CD8-positive, alpha-beta memory T cell (primary cell): ENCODE measurements at regions of chr2 and their contacts with region 1.

Region 1: DNA sequence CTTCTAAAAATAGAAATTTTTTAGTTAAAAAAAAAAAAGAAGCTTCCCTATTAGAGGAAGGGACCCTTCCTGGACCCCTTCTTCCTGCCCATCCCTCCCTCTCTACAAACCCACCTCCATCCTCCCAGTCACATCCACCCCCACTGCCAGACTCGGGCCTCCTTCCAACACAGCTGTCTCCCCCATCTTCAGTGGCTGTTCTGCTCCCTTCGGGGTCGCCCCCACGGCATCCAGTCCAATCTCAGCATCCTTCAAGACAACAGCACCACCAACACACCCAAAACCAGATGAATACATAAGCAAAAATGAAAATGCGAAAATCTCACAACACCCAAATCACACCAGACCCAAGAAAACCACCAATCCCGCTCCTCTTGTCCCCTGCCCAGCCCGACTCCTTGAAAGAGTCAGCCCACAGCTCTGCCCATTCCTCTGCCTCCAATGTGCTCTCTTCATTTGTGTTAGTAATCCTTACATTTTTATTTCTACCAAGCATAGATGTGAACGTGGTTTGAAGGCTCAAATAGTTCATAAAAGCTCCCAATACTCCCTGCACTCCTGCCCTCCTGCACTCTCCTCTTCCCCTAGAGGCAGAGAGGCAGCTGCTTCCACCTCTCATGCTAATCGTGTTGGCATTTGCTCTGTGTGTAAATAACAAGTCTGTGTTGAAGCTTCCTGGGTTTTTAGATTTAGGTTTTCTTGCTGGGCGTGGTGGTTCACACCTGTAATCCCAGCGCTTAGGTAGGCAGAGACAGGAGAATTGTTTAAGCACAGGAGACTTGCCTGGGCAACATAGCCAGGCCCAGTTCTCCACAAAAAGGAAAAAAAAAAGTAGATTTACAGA is 37.0 kb downstream of the MAL start:
- DNase-seq: no peak
- H3K4me3 ChIP-seq: no peak overlapping the region
- H3K4me3 Mint-ChIP-seq: peak overlapping the region in 2 of 7 donors; percentile 24 to 34
- H3K27ac ChIP-seq: no peak overlapping the region
- H3K27ac Mint-ChIP-seq: peak overlapping the region in 5 of 8 donors; percentile 53 to 76 (median 65)
- H3K4me1 ChIP-seq: peaks cover 25% of the 10 kb centered on the region
- H3K4me1 Mint-ChIP-seq: peaks cover 10 to 28% (median 19%) of the 10 kb centered on the region in 3 donors
- H3K27me3 ChIP-seq: no peaks in the 10 kb centered on the region
- H3K27me3 Mint-ChIP-seq: peaks cover 4 to 10% of the 10 kb centered on the region in 2 donors

Region 2: DNA sequence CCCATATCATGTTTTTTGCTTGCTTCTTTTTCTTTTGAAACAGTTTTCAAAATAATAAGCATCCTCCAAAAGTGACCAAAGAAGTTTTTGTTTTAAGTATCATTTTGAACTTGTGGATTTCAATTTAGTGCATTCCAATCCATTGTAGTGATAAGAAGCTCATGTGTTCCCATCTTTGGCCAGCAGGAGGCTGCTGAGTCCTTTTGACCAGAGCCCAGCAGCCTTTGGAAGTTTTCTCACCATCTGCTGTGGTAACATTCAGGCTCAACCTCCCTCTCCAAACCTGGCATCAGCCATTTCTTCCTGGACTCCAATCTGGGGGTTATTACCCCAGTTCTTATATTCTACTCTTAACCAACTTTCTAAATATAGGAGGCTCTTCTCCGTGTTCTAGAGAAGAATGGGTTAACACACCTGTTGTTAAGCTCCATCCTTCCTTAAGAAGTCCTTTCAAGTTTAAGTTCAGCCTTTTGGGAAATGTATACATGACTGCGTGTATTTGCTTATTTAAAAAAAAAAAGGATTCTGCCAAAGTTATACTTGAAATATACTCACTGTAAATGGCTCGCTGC is 76.0 kb before region 1 on chr2:
- CTCF ChIA-PET with region 1: no interaction called
- POLR2A ChIA-PET with region 1: no interaction called
- DNase-seq: peak in 1 of 5 donors; percentile 6
- H3K4me3 ChIP-seq: no peak overlapping the region
- H3K4me3 Mint-ChIP-seq: no peak overlapping the region
- H3K27ac ChIP-seq: no peak overlapping the region
- H3K27ac Mint-ChIP-seq: no peak overlapping the region
- H3K4me1 ChIP-seq: no peaks in the 10 kb centered on the region
- H3K4me1 Mint-ChIP-seq: no peaks in the 10 kb centered on the region
- H3K27me3 ChIP-seq: no peaks in the 10 kb centered on the region
- H3K27me3 Mint-ChIP-seq: peaks cover 3 to 30% of the 10 kb centered on the region in 2 donors

Region 3: GRCh38 chr2:95007822-95008221 is 54.6 kb before region 1 on chr2:
- CTCF ChIA-PET with region 1: no interaction called
- POLR2A ChIA-PET with region 1: no interaction called
- DNase-seq: no peak
- H3K4me3 ChIP-seq: no peak overlapping the region
- H3K4me3 Mint-ChIP-seq: no peak overlapping the region
- H3K27ac ChIP-seq: no peak overlapping the region
- H3K27ac Mint-ChIP-seq: no peak overlapping the region
- H3K4me1 ChIP-seq: no peaks in the 10 kb centered on the region
- H3K4me1 Mint-ChIP-seq: peaks cover 0 to 6% (median 5%) of the 10 kb centered on the region in 3 donors
- H3K27me3 ChIP-seq: no peaks in the 10 kb centered on the region
- H3K27me3 Mint-ChIP-seq: peaks cover 6 to 16% of the 10 kb centered on the region in 2 donors

Region 4: DNA sequence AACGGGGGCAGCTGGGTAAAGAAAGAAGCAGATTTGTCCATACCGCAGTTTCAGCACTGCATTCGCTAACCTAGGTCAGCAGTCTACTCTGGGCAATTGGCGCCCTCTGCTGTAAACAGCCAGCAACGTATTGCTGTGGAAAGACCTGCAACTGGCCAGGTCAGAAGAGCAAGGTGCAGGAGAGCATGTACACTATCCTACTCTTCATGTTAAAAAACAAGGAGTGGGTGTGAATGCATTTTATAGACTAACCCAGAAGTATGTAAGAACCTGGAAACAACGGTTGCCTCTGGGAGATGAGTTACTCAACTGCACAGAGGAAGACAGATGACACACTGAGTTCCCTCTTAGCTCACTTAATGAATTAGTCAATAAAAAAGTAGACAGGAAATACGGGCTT is 53.0 kb after region 1 on chr2:
- CTCF ChIA-PET with region 1: interaction called, 10 read pairs
- POLR2A ChIA-PET with region 1: no interaction called
- DNase-seq: peak; percentile 31 to 80 (median 46)
- H3K4me3 ChIP-seq: no peak overlapping the region
- H3K4me3 Mint-ChIP-seq: no peak overlapping the region
- H3K27ac ChIP-seq: no peak overlapping the region
- H3K27ac Mint-ChIP-seq: peak overlapping the region in 4 of 8 donors; percentile 2 to 76 (median 32)
- H3K4me1 ChIP-seq: peaks cover 34% of the 10 kb centered on the region
- H3K4me1 Mint-ChIP-seq: peaks cover 42 to 47% (median 46%) of the 10 kb centered on the region in 3 donors
- H3K27me3 ChIP-seq: no peaks in the 10 kb centered on the region
- H3K27me3 Mint-ChIP-seq: no peaks in the 10 kb centered on the region

Region 5: GRCh38 chr2:95158891-95159619 is 96.6 kb after region 1 on chr2:
- CTCF ChIA-PET with region 1: no interaction called
- POLR2A ChIA-PET with region 1: no interaction called
- DNase-seq: no peak
- H3K4me3 ChIP-seq: peak overlapping the region; percentile 75
- H3K4me3 Mint-ChIP-seq: peak overlapping the region; percentile 80 to 92 (median 83)
- H3K27ac ChIP-seq: peak overlapping the region; percentile 64
- H3K27ac Mint-ChIP-seq: peak overlapping the region in 6 of 8 donors; percentile 50 to 83 (median 60)
- H3K4me1 ChIP-seq: peaks cover 14% of the 10 kb centered on the region
- H3K4me1 Mint-ChIP-seq: peaks cover 6 to 26% (median 17%) of the 10 kb centered on the region in 3 donors
- H3K27me3 ChIP-seq: no peaks in the 10 kb centered on the region
- H3K27me3 Mint-ChIP-seq: no peaks in the 10 kb centered on the region

Region 6: GRCh38 chr2:95207111-95207961 is 144.9 kb after region 1 on chr2 and contains the start of gene ZNF892:
- CTCF ChIA-PET with region 1: no interaction called
- POLR2A ChIA-PET with region 1: no interaction called
- DNase-seq: peak; percentile 62 to 78 (median 70)
- H3K4me3 ChIP-seq: peak within 1 kb of the TSS; percentile 76
- H3K4me3 Mint-ChIP-seq: peak within 1 kb of the TSS; percentile 90 to 96 (median 95)
- H3K27ac ChIP-seq: peak within 1 kb of the TSS; percentile 58
- H3K27ac Mint-ChIP-seq: peak within 1 kb of the TSS in 7 of 8 donors; percentile 77 to 96 (median 85)
- H3K4me1 ChIP-seq: peaks cover 9% of the 10 kb centered on the region
- H3K4me1 Mint-ChIP-seq: peaks cover 27 to 32% (median 29%) of the 10 kb centered on the region in 3 donors
- H3K27me3 ChIP-seq: no peaks in the 10 kb centered on the region
- H3K27me3 Mint-ChIP-seq: peaks cover 0 to 1% of the 10 kb centered on the region in 2 donors
- total RNA-seq, gene ZNF892: 4.3 to 4.7 TPM